ENCODE measurements at regions of chr1 and their contacts with region 1.

Region 1: GRCh38 chr1:113928941-113929749 is at the start of gene HIPK1:
- DNase-seq: peak; percentile 87 to 94 (median 90)
- H3K4me3 ChIP-seq: peak within 1 kb of the TSS; percentile 92
- H3K4me3 Mint-ChIP-seq: peak within 1 kb of the TSS; percentile 94 to 100 (median 99)
- H3K27ac ChIP-seq: peak within 1 kb of the TSS; percentile 99
- H3K27ac Mint-ChIP-seq: peak within 1 kb of the TSS; percentile 98 to 100 (median 100)
- H3K4me1 ChIP-seq: peaks cover 40% of the 10 kb centered on the region
- H3K4me1 Mint-ChIP-seq: peaks cover 51 to 58% (median 55%) of the 10 kb centered on the region in 3 donors
- H3K27me3 ChIP-seq: no peaks in the 10 kb centered on the region
- H3K27me3 Mint-ChIP-seq: peaks cover 0 to 12% of the 10 kb centered on the region in 2 donors
- total RNA-seq, gene HIPK1: 80.9 to 81.2 TPM

Region 2: GRCh38 chr1:113811888-113812660 is 117.1 kb before region 1 on chr1 and contains the start of gene RSBN1:
- CTCF ChIA-PET with region 1: interaction called, 7 read pairs
- POLR2A ChIA-PET with region 1: interaction called, 27 read pairs
- DNase-seq: peak; percentile 96 to 99 (median 98)
- H3K4me3 ChIP-seq: peak within 1 kb of the TSS; percentile 72
- H3K4me3 Mint-ChIP-seq: peak within 1 kb of the TSS; percentile 94 to 100 (median 97)
- H3K27ac ChIP-seq: peak within 1 kb of the TSS; percentile 89
- H3K27ac Mint-ChIP-seq: peak within 1 kb of the TSS; percentile 94 to 98 (median 96)
- H3K4me1 ChIP-seq: peaks cover 34% of the 10 kb centered on the region
- H3K4me1 Mint-ChIP-seq: peaks cover 33 to 52% (median 49%) of the 10 kb centered on the region in 3 donors
- H3K27me3 ChIP-seq: no peaks in the 10 kb centered on the region
- H3K27me3 Mint-ChIP-seq: no peaks in the 10 kb centered on the region
- total RNA-seq, gene RSBN1: 18.5 to 19.2 TPM

Region 3: DNA sequence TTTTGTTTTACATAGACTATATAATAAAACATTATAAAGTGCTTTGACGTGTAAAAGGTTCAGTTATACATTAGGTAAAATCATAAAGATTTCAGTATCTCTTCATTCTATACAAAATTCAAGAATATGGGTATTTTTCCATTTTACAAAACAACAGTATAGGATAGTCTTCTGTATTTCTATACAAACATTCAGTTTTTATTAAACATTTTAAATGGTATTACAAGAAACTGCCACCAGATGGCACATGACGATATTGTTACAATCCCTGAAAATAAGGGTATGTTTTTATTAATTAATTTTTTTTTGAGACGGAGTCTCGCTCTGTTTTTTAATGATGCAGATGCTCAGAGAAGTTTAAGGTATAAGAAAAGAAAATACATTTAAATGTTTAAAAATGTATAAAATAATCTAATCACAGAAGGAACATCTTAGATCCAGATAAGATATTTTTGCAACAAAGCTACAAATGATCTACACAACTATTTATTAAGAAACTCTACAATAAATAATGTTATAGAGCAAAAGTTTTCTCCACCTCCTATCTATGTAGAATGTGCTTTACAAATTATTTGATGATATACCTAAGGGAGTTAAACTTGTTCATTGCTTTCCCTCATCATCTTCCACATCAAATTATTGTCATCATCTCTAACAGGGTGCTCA is 93.4 kb before region 1 on chr1:
- CTCF ChIA-PET with region 1: interaction called, 22 read pairs
- POLR2A ChIA-PET with region 1: interaction called, 10 read pairs
- DNase-seq: peak in 3 of 5 donors; percentile 3 to 59 (median 47)
- H3K4me3 ChIP-seq: no peak overlapping the region
- H3K4me3 Mint-ChIP-seq: no peak overlapping the region
- H3K27ac ChIP-seq: no peak overlapping the region
- H3K27ac Mint-ChIP-seq: peak overlapping the region in 6 of 8 donors; percentile 6 to 71 (median 54)
- H3K4me1 ChIP-seq: no peaks in the 10 kb centered on the region
- H3K4me1 Mint-ChIP-seq: peaks cover 9 to 14% (median 10%) of the 10 kb centered on the region in 3 donors
- H3K27me3 ChIP-seq: no peaks in the 10 kb centered on the region
- H3K27me3 Mint-ChIP-seq: no peaks in the 10 kb centered on the region

Region 4: GRCh38 chr1:113904674-113905434 is 24.3 kb before region 1 on chr1 and contains the starts of genes AP4B1 and DCLRE1B:
- CTCF ChIA-PET with region 1: interaction called, 95 read pairs
- POLR2A ChIA-PET with region 1: interaction called, 95 read pairs
- DNase-seq: peak; percentile 93 to 99 (median 97)
- H3K4me3 ChIP-seq: peak within 1 kb of the TSS; percentile 96
- H3K4me3 Mint-ChIP-seq: peak within 1 kb of the TSS; percentile 93 to 100 (median 95)
- H3K27ac ChIP-seq: peak within 1 kb of the TSS; percentile 94
- H3K27ac Mint-ChIP-seq: peak within 1 kb of the TSS; percentile 95 to 100 (median 99)
- H3K4me1 ChIP-seq: peaks cover 34% of the 10 kb centered on the region
- H3K4me1 Mint-ChIP-seq: peaks cover 49 to 69% (median 58%) of the 10 kb centered on the region in 3 donors
- H3K27me3 ChIP-seq: no peaks in the 10 kb centered on the region
- H3K27me3 Mint-ChIP-seq: peaks cover 0 to 2% of the 10 kb centered on the region in 2 donors
- total RNA-seq, gene AP4B1: 33.7 to 36.2 TPM
- total RNA-seq, gene DCLRE1B: 31.2 to 32.1 TPM

Region 5: DNA sequence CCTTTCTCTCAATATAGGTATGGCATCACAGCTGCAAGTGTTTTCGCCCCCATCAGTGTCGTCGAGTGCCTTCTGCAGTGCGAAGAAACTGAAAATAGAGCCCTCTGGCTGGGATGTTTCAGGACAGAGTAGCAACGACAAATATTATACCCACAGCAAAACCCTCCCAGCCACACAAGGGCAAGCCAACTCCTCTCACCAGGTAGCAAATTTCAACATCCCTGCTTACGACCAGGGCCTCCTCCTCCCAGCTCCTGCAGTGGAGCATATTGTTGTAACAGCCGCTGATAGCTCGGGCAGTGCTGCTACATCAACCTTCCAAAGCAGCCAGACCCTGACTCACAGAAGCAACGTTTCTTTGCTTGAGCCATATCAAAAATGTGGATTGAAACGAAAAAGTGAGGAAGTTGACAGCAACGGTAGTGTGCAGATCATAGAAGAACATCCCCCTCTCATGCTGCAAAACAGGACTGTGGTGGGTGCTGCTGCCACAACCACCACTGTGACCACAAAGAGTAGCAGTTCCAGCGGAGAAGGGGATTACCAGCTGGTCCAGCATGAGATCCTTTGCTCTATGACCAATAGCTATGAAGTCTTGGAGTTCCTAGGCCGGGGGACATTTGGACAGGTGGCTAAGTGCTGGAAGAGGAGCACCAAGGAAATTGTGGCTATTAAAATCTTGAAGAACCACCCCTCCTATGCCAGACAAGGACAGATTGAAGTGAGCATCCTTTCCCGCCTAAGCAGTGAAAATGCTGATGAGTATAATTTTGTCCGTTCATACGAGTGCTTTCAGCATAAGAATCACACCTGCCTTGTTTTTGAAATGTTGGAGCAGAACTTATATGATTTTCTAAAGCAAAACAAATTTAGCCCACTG is 11.5 kb after region 1 on chr1:
- CTCF ChIA-PET with region 1: interaction called, 74 read pairs
- POLR2A ChIA-PET with region 1: interaction called, 38 read pairs
- DNase-seq: peak; percentile 14 to 71 (median 51)
- H3K4me3 ChIP-seq: peak overlapping the region; percentile 4
- H3K4me3 Mint-ChIP-seq: peak overlapping the region; percentile 59 to 87 (median 81)
- H3K27ac ChIP-seq: no peak overlapping the region
- H3K27ac Mint-ChIP-seq: peak overlapping the region; percentile 90 to 97 (median 94)
- H3K4me1 ChIP-seq: peaks cover 83% of the 10 kb centered on the region
- H3K4me1 Mint-ChIP-seq: peaks cover 70 to 87% (median 84%) of the 10 kb centered on the region in 3 donors
- H3K27me3 ChIP-seq: no peaks in the 10 kb centered on the region
- H3K27me3 Mint-ChIP-seq: no peaks in the 10 kb centered on the region

Region 6: DNA sequence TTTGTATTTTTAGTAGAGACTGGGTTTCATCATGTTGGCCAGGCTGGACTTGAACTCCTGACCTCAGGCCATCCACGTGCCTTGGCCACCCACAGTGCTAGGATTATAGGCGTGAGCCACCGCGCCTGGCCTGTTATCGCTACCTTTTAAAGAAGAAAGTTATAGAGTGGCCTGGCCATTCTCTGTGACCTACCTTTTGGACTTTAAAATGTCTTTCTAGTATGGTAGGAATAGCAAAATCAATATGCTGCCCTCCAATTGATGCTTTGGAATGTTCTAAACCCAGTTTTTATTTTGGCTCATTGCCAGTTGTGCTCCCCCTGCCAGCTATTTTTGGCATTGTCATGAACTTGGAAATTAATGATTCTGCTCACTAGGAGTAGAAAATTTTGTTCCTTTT is 19.9 kb after region 1 on chr1:
- CTCF ChIA-PET with region 1: interaction called, 74 read pairs
- POLR2A ChIA-PET with region 1: interaction called, 38 read pairs
- DNase-seq: peak in 1 of 5 donors; percentile 46
- H3K4me3 ChIP-seq: no peak overlapping the region
- H3K4me3 Mint-ChIP-seq: peak overlapping the region in 5 of 7 donors; percentile 15 to 78 (median 30)
- H3K27ac ChIP-seq: no peak overlapping the region
- H3K27ac Mint-ChIP-seq: peak overlapping the region; percentile 48 to 96 (median 92)
- H3K4me1 ChIP-seq: peaks cover 80% of the 10 kb centered on the region
- H3K4me1 Mint-ChIP-seq: peaks cover 68 to 91% (median 88%) of the 10 kb centered on the region in 3 donors
- H3K27me3 ChIP-seq: no peaks in the 10 kb centered on the region
- H3K27me3 Mint-ChIP-seq: no peaks in the 10 kb centered on the region

Region 7: DNA sequence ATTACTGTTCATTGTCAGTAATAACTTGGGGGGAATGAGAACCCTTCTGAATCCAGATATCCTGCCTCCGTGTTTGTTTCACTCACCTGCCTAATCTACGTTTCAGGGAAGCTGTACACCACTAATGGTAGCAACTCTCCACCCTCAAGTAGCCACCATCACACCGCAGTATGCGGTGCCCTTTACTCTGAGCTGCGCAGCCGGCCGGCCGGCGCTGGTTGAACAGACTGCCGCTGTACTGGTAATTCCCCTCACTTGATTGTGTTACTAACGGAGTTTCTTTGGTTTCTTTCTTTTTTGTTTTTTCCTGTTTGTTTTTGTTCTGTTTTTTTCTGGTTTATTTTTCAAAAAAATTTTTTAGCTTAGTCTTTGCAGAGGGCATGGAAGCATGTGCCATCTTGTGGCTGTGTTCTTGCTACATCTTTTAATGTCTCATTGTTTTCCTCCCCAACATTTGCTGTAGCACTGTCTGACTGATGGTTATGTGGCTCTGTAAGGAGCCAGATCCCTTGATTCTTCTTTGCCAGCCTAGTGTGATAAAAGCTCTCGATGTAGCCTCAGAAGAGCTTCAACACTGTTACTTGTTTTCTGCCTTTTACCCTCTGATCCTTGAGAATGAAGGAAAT is 34.2 kb after region 1 on chr1:
- CTCF ChIA-PET with region 1: interaction called, 19 read pairs
- POLR2A ChIA-PET with region 1: interaction called, 4 read pairs
- DNase-seq: peak in 1 of 5 donors; percentile 31
- H3K4me3 ChIP-seq: no peak overlapping the region
- H3K4me3 Mint-ChIP-seq: no peak overlapping the region
- H3K27ac ChIP-seq: no peak overlapping the region
- H3K27ac Mint-ChIP-seq: peak overlapping the region in 5 of 8 donors; percentile 0 to 83 (median 36)
- H3K4me1 ChIP-seq: no peaks in the 10 kb centered on the region
- H3K4me1 Mint-ChIP-seq: peaks cover 16 to 31% (median 27%) of the 10 kb centered on the region in 3 donors
- H3K27me3 ChIP-seq: no peaks in the 10 kb centered on the region
- H3K27me3 Mint-ChIP-seq: no peaks in the 10 kb centered on the region

Measured in CD8-positive, alpha-beta memory T cell (primary cell).